Mammary epithelial cell (primary cell): ENCODE measurements at regions of chr3 and their contacts with region 1.

Region 1: GRCh38 chr3:194782698-194783404 is 97.2 kb downstream of the FAM43A start:
- DNase-seq: peak; percentile 45
- H3K4me3 ChIP-seq: no peak overlapping the region
- H3K27ac ChIP-seq: no peak overlapping the region
- H3K4me1 ChIP-seq: no peaks in the 10 kb centered on the region
- H3K27me3 ChIP-seq: no peaks in the 10 kb centered on the region
- CTCF ChIP-seq: no peak

Region 2: DNA sequence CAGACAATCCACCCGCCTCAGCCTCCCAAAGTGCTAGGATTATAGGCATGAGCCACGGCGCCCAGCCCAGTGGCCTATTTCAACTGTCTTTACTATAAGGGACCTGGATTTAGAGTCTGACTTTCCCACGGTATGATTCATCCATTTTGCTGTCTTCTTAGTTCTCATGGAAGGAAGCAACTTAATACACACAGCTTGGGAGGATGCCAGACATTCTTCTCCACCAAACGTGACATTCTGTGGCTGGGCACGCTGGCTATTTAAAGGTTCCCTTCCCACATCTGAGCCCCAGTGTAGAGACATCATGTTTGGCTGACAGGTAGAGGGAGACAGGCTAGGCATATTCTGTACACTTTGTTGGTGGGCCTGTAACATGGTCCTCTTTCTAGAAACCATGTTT is 70.9 kb before region 1 on chr3:
- CTCF ChIA-PET with region 1: no interaction called
- dilution Hi-C with region 1: loop called (anchors 5 kb)
- in situ Hi-C with region 1: no loop called
- intact Hi-C with region 1: no loop called
- DNase-seq: peak; percentile 88
- H3K4me3 ChIP-seq: no peak overlapping the region
- H3K27ac ChIP-seq: no peak overlapping the region
- H3K4me1 ChIP-seq: peaks cover 2% of the 10 kb centered on the region
- H3K27me3 ChIP-seq: no peaks in the 10 kb centered on the region
- CTCF ChIP-seq: no peak

Region 3: DNA sequence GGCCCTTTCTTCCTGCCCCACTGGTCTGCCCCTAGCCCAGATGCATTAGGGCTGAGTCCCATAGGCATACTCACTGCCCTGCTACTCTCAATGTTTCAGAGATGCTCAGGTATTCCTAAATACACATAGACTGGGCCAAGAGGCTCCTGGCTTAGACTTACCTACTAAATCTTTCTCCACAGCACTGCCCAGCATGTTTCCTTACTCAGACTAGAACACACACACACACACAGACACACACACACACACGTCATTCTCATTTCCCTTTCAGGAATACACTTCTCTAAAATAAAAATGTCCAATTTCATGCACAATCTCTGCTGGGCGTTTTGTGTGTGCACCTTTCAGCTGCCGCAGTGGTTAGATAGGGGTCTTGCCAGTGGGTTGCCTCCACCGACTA is 78.5 kb after region 1 on chr3:
- CTCF ChIA-PET with region 1: no interaction called
- dilution Hi-C with region 1: loop called (anchors 5 kb)
- in situ Hi-C with region 1: no loop called
- intact Hi-C with region 1: no loop called
- DNase-seq: no peak
- H3K4me3 ChIP-seq: no peak overlapping the region
- H3K27ac ChIP-seq: no peak overlapping the region
- H3K4me1 ChIP-seq: no peaks in the 10 kb centered on the region
- H3K27me3 ChIP-seq: no peaks in the 10 kb centered on the region
- CTCF ChIP-seq: no peak